ENCODE measurements at regions of chr10 and their contacts with region 1.

Region 1: GRCh38 chr10:108204479-108205305 is 1040.2 kb upstream of the SORCS1 start:
- DNase-seq: peak; percentile 59
- H3K4me3 Mint-ChIP-seq: no peak overlapping the region
- H3K27ac Mint-ChIP-seq: no peak overlapping the region
- H3K4me1 Mint-ChIP-seq: no peaks in the 10 kb centered on the region
- H3K27me3 Mint-ChIP-seq: no peaks in the 10 kb centered on the region
- CTCF ChIP-seq: peak; percentile 75

Region 2: GRCh38 chr10:107163881-107164861 is 1040.5 kb before region 1 on chr10 and contains the start of gene SORCS1:
- CTCF ChIA-PET with region 1: no interaction called
- POLR2A ChIA-PET with region 1: no interaction called
- intact Hi-C with region 1: loop called (anchors 10 kb)
- DNase-seq: no peak
- H3K4me3 Mint-ChIP-seq: no peak within 1 kb of the TSS
- H3K27ac Mint-ChIP-seq: no peak within 1 kb of the TSS
- H3K4me1 Mint-ChIP-seq: peaks cover 6% of the 10 kb centered on the region
- H3K27me3 Mint-ChIP-seq: no peaks in the 10 kb centered on the region
- CTCF ChIP-seq: no peak
- total RNA-seq, gene SORCS1: 0.54 TPM in 1 of 2 replicates, not detected in the other

Region 3: DNA sequence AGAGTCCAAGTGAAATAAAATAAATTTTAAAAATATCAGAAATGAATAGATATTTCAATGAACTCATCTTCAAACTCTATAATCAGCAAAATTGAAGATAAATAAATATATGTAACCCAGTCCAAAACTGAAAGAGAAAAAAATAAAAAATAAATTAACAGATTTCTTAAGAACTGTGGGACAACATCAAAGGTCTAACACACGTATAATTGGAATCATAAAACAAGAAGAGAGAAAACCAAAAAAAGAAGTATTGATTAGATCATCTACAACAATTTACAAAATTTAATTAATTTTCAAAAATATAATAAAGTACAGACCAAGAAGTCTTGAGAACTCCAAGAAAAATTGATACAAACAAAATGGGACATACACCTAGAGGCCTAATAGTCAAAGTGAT is 414.4 kb before region 1 on chr10:
- CTCF ChIA-PET with region 1: no interaction called
- POLR2A ChIA-PET with region 1: no interaction called
- intact Hi-C with region 1: no loop called
- DNase-seq: no peak
- H3K4me3 Mint-ChIP-seq: no peak overlapping the region
- H3K27ac Mint-ChIP-seq: no peak overlapping the region
- H3K4me1 Mint-ChIP-seq: no peaks in the 10 kb centered on the region
- H3K27me3 Mint-ChIP-seq: no peaks in the 10 kb centered on the region
- CTCF ChIP-seq: no peak

Region 4: GRCh38 chr10:107914450-107915214 is 290.1 kb before region 1 on chr10:
- CTCF ChIA-PET with region 1: interaction called, 5 read pairs
- POLR2A ChIA-PET with region 1: no interaction called
- intact Hi-C with region 1: loop called (anchors 2 kb)
- DNase-seq: peak; percentile 9
- H3K4me3 Mint-ChIP-seq: peak overlapping the region; percentile 68
- H3K27ac Mint-ChIP-seq: no peak overlapping the region
- H3K4me1 Mint-ChIP-seq: peaks cover 9% of the 10 kb centered on the region
- H3K27me3 Mint-ChIP-seq: no peaks in the 10 kb centered on the region
- CTCF ChIP-seq: no peak

Region 5: GRCh38 chr10:109018944-109019424 is 814.3 kb after region 1 on chr10:
- CTCF ChIA-PET with region 1: no interaction called
- POLR2A ChIA-PET with region 1: no interaction called
- intact Hi-C with region 1: loop called (anchors 1 kb)
- DNase-seq: peak; percentile 13
- H3K4me3 Mint-ChIP-seq: no peak overlapping the region
- H3K27ac Mint-ChIP-seq: no peak overlapping the region
- H3K4me1 Mint-ChIP-seq: peaks cover 8% of the 10 kb centered on the region
- H3K27me3 Mint-ChIP-seq: no peaks in the 10 kb centered on the region
- CTCF ChIP-seq: peak; percentile 36